ENCODE measurements at regions of chr22 and their contacts with region 1.

Region 1: DNA sequence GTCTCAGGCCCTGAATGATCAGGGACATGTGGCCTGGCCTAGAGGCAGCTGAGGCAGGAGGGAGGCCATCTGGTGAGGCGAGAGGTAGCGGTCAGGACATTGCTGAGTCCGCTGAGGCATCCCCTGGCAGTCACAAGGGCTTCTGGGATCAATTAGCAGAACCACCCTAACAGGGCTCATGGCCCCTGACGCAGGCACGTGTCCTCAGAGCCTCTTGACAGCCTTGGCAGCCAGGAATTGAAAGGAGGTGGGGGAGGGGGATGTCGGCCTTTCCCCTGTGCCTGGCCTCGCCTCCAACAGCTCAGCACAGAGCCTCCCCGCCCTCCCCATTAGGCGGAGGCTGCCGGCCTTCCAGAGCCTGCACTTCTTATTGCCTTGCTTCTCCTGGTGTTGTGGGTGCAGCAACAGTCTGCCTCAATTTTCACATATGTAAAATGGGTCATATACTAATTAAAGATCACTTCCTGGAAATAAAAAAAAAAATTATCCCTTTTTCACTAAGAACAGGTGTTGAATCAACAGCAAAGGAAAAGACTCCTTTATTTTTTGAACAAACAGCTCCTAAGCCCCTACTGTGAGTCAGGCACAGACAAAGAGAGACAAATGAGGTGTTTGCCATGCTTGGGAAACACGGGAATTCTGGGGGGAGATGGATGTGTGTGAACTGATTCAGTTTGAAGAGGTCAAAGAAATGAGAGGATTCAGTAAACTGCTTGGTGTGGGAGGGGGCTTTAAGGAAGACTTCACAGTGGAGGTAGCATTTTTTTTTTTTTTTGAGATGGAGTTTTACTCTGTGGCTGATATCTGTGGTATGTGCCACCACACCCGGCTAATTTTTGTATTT is 55.3 kb downstream of the NFAM1 start:
- DNase-seq: no peak
- H3K4me3 ChIP-seq: no peak overlapping the region
- H3K27ac ChIP-seq: no peak overlapping the region
- H3K4me1 ChIP-seq: 0 out of 2 replicates have a peak, but pooled peaks cover 3% of the 10 kb centered on the region
- H3K27me3 ChIP-seq: no peaks in the 10 kb centered on the region
- CTCF ChIP-seq: no peak

Region 2: GRCh38 chr22:41998361-41999275 is 378.3 kb before region 1 on chr22 and contains the start of gene WBP2NL:
- CTCF ChIA-PET with region 1: interaction called, 16 read pairs
- POLR2A ChIA-PET with region 1: no interaction called
- intact Hi-C with region 1: no loop called
- DNase-seq: peak; percentile 72 to 89
- H3K4me3 ChIP-seq: peak within 1 kb of the TSS; percentile 76
- H3K27ac ChIP-seq: no peak within 1 kb of the TSS
- H3K4me1 ChIP-seq: peaks cover 16% of the 10 kb centered on the region
- H3K27me3 ChIP-seq: peaks cover 3% of the 10 kb centered on the region; the same call in 1 of the 2 replicates
- CTCF ChIP-seq: no peak
- total RNA-seq, gene WBP2NL: 7.1 and 12.2 TPM in 2 replicates

Region 3: DNA sequence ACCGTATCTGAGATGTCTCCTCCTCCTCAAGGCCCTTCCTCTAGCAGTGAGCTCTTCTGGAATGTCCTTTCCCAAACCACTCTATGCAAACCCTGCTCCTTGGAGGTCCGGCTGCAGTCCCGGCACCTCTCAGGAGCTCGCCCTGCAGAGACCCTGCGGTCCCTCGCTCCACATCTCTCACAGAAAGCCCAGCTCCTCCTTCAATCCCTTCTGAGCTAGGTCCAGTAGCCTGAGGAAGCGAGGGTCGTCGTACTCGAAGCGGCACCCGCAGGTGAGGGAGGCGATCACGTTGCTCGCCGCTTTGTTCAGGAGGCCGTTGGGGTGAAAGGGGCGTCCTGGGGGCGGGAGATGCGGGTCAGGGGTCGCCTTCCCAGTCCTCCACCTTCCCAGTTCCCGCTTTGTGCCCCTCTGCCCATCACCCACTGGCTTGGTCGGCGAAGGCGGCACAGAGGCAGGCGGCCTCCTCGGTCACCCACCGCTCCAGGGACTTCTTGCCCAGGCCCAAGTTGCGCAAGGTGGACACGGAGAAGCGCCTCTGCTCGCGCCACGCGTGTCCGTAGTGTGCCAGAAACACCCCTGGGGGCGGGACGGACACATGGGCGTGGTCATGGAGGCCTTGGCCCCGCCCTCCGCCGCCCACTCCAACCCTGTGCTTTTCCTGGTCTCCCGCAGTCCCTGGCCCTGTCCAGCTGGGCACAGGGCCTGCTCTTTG is 224.9 kb before region 1 on chr22:
- CTCF ChIA-PET with region 1: no interaction called
- POLR2A ChIA-PET with region 1: interaction called, 15 read pairs
- intact Hi-C with region 1: no loop called
- DNase-seq: no peak
- H3K4me3 ChIP-seq: no peak overlapping the region
- H3K27ac ChIP-seq: no peak overlapping the region
- H3K4me1 ChIP-seq: no peaks in the 10 kb centered on the region
- H3K27me3 ChIP-seq: no peaks in the 10 kb centered on the region
- CTCF ChIP-seq: no peak

Region 4: DNA sequence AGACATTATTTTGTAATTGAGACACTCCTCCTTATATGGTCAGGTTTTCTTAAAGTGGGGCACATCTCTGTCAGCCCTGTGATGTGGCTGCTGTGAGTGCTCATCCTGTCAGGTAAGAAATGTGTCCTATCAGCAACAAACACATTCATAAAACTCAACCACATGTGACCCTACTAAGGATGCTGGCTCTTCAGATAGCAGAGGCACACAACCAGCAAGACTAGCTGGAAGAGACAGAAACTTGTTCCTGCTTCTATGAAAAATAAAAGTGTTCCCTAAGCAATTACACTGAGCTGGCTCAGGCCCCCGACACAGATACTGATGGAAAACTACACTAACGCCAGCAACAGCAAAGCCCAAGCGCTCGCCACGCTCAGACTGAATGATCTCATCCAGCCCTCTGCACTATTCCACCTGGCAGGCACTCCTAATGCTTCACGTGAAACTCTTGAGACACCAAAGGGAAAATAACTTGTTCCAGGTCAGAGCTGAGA is 196.5 kb before region 1 on chr22:
- CTCF ChIA-PET with region 1: no interaction called
- POLR2A ChIA-PET with region 1: no interaction called
- intact Hi-C with region 1: no loop called
- DNase-seq: no peak
- H3K4me3 ChIP-seq: no peak overlapping the region
- H3K27ac ChIP-seq: no peak overlapping the region
- H3K4me1 ChIP-seq: no peaks in the 10 kb centered on the region
- H3K27me3 ChIP-seq: no peaks in the 10 kb centered on the region
- CTCF ChIP-seq: no peak

Region 5: GRCh38 chr22:42388130-42388797 is 11.3 kb after region 1 on chr22:
- CTCF ChIA-PET with region 1: no interaction called
- POLR2A ChIA-PET with region 1: no interaction called
- intact Hi-C with region 1: no loop called
- DNase-seq: peak; percentile 15 to 48
- H3K4me3 ChIP-seq: no peak overlapping the region
- H3K27ac ChIP-seq: no peak overlapping the region
- H3K4me1 ChIP-seq: no peaks in the 10 kb centered on the region
- H3K27me3 ChIP-seq: no peaks in the 10 kb centered on the region
- CTCF ChIP-seq: no peak

Region 6: DNA sequence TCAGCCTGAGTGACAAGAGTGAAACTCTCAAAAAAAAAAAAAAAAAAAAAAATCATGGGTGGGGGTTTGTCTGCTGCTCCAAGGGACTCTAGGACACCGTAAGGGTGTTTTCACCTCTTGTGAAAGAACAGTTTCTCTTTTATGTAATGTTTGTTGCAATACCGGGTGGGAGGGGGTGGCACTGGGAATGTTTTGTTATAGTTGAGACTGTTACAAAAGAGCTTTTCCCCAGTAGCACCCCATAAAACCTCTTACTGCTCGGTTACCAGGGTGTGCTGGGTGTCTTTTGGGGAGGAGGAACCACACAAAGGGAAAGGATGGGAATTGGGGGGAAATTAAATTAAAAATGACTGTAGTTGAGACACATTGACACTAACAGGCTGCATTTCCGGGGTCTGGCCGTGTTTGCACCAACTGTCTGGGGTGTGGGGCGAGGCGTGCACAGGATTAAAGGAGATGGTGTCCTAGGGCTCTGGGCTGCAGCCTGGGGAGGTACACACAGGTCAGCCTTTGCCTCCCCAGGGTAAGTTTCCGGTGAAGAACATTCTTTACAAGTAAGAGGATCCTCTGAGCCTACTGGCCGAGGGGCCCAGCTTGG is 53.7 kb after region 1 on chr22:
- CTCF ChIA-PET with region 1: interaction called, 12 read pairs
- POLR2A ChIA-PET with region 1: no interaction called
- intact Hi-C with region 1: no loop called
- DNase-seq: no peak
- H3K4me3 ChIP-seq: no peak overlapping the region
- H3K27ac ChIP-seq: no peak overlapping the region
- H3K4me1 ChIP-seq: no peaks in the 10 kb centered on the region
- H3K27me3 ChIP-seq: peaks cover 47% of the 10 kb centered on the region
- CTCF ChIP-seq: no peak